ENCODE measurements at regions of chr11 and their contacts with region 1.

Region 1: GRCh38 chr11:63845303-63845702 is 6.4 kb downstream of the MARK2 start:
- DNase-seq: no peak
- H3K4me3 ChIP-seq: no peak overlapping the region
- H3K27ac ChIP-seq: no peak overlapping the region
- H3K4me1 ChIP-seq: peaks cover 17 to 43% (median 30%) of the 10 kb centered on the region in 4 experiments
- H3K27me3 ChIP-seq: no peaks in the 10 kb centered on the region

Region 2: GRCh38 chr11:63855975-63856749 is 10.9 kb after region 1 on chr11:
- CTCF ChIA-PET with region 1: interaction called, 11 read pairs
- POLR2A ChIA-PET with region 1: interaction called, 6 read pairs
- DNase-seq: no peak
- H3K4me3 ChIP-seq: no peak overlapping the region
- H3K27ac ChIP-seq: no peak overlapping the region
- H3K4me1 ChIP-seq: peaks cover 3 to 22% (median 11%) of the 10 kb centered on the region in 4 experiments
- H3K27me3 ChIP-seq: no peaks in the 10 kb centered on the region

Region 3: GRCh38 chr11:63866211-63866610 is 20.9 kb after region 1 on chr11:
- CTCF ChIA-PET with region 1: interaction called, 30 read pairs
- POLR2A ChIA-PET with region 1: no interaction called
- DNase-seq: peak; percentile 75 to 90 (median 89)
- H3K4me3 ChIP-seq: no peak overlapping the region
- H3K27ac ChIP-seq: no peak overlapping the region
- H3K4me1 ChIP-seq: peaks cover 29 to 77% (median 69%) of the 10 kb centered on the region in 4 experiments
- H3K27me3 ChIP-seq: no peaks in the 10 kb centered on the region

Region 4: GRCh38 chr11:64060861-64061444 is 215.7 kb after region 1 on chr11:
- CTCF ChIA-PET with region 1: no interaction called
- POLR2A ChIA-PET with region 1: no interaction called
- DNase-seq: peak; percentile 31 to 56 (median 49)
- H3K4me3 ChIP-seq: peak overlapping the region in 6 of 7 experiments; percentile 28 to 72 (median 55)
- H3K27ac ChIP-seq: no peak overlapping the region
- H3K4me1 ChIP-seq: peaks cover 0 to 13% (median 8%) of the 10 kb centered on the region in 4 experiments
- H3K27me3 ChIP-seq: peaks cover 0 to 45% (median 19%) of the 10 kb centered on the region in 5 experiments

Measured in common myeloid progenitor, CD34-positive (primary cell).